ENCODE measurements at regions of chr19 and their contacts with region 1.

Region 1: DNA sequence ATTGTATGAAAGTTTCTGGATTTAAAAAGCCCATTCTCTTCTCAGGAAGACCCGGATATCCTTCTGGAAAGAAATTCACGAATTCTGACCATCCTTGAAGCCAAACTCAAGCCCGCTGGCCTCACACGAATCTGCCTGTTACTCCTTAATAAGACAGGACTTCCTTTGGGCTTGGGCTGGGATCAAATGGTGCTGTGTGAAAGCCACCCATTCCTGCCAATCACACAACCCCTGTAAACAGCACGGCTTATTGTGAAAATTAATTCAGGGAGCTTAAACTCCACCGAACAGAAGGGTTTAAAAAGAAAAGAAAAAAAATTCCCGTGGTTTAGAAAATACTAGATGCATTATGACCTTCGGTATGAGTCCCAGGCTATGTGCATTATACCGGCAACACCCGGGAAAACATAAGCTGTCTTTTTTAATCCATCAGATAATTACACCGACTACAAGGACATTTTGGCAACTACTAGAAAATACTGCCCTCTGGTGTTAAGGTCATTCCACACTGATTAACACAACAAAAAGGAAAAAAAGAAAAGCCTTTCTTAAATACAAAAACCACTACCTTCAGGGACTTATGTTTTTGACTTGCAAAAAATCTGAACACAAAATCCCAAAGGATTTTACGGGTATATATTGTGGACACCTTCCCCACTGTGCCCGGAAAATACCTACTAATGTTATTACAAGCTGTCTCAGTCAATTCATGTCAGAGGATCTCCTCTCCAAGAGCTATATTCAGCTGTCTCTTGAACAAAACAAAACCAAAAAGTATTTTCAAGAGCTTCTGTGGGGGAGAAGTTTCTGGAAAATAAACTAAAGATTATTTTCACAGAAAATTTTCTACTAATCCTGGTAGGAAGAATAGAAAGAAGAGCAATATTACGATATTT is 76.0 kb upstream of the LSM14A start:
- DNase-seq: peak; percentile 11
- H3K4me3 ChIP-seq: no peak overlapping the region
- H3K27ac ChIP-seq: no peak overlapping the region
- H3K27me3 ChIP-seq: no peaks in the 10 kb centered on the region
- CTCF ChIP-seq: peak; percentile 57

Region 2: DNA sequence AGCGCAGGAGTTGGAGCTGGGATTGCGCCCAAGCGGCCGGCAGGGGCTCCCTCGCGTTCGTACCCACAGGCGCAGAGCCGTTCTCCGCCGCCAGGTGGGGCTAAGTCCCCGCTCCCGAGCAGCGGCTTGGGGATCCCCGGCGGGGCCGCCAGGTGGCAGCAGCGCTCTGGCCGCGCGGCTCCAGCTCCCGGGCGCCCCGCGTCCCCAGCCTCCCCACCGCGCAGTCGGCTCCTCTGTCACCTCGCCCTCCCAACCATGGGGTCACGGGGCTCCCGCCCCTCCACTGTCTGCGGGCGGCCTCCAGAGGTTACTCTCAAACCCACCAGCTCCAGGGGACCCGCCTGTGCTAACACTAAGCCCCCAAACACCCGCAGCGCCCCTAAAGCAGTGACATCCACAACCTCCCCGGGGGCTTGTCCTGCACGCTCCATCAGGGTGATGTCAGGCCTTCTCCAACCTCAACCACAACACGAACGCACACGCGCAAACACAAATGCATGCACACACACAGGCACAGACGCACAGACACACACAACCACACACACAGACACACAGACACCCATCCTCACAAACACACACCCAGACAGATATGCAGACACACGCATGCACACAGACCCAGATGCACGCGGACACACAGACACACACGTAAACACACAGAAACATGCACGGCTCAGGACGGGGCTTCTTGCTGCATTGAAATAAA is 318.0 kb before region 1 on chr19:
- CTCF ChIA-PET with region 1: interaction called, 127 read pairs
- POLR2A ChIA-PET with region 1: no interaction called
- DNase-seq: no peak
- H3K4me3 ChIP-seq: no peak overlapping the region
- H3K27ac ChIP-seq: peak overlapping the region; percentile 11
- H3K27me3 ChIP-seq: peaks cover 11% of the 10 kb centered on the region
- CTCF ChIP-seq: peak; percentile 100

Region 3: DNA sequence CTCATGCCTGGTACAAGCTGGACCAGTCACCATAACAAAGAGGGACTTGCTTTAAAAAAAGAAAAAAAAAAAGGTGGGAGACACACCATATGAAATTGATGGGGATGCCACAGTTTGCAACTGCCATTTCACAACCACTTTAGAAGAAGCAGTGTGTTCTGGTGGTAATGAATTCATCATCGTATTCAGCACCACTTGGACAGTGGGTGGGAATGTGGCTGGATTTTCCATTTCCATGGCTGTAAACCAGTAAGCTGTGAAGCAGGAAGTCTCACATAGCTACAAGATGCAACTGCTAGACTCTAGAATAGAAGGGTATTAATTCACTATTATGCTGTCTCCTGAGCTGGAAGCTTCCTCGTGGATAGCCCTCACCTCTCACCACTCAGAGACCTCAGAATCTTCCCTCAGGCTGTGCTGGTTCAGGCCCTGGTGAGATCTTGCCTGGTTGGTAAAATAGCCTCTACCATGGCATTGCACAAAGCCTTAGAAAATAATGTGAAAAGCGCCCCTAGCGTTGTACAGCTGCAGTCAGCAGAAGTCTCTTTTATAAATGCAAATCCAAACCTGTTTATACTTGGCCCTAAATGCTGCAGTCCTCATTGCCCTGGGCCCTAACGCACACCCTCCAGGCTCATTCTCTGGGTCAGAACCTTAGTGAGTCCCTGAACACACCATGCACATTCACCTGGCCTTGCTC is 148.9 kb before region 1 on chr19:
- CTCF ChIA-PET with region 1: no interaction called
- POLR2A ChIA-PET with region 1: no interaction called
- DNase-seq: no peak
- H3K4me3 ChIP-seq: no peak overlapping the region
- H3K27ac ChIP-seq: no peak overlapping the region
- H3K27me3 ChIP-seq: no peaks in the 10 kb centered on the region
- CTCF ChIP-seq: 0 out of 2 replicates have a peak, but pooled peaks have one; percentile 3

Region 4: GRCh38 chr19:33998739-33999345 is 97.4 kb before region 1 on chr19:
- CTCF ChIA-PET with region 1: interaction called, 20 read pairs
- POLR2A ChIA-PET with region 1: no interaction called
- DNase-seq: no peak
- H3K4me3 ChIP-seq: no peak overlapping the region
- H3K27ac ChIP-seq: no peak overlapping the region
- H3K27me3 ChIP-seq: peaks cover 2% of the 10 kb centered on the region
- CTCF ChIP-seq: peak; percentile 46

Region 5: GRCh38 chr19:34041925-34042521 is 54.2 kb before region 1 on chr19:
- CTCF ChIA-PET with region 1: interaction called, 116 read pairs
- POLR2A ChIA-PET with region 1: no interaction called
- DNase-seq: no peak
- H3K4me3 ChIP-seq: no peak overlapping the region
- H3K27ac ChIP-seq: no peak overlapping the region
- H3K27me3 ChIP-seq: no peaks in the 10 kb centered on the region
- CTCF ChIP-seq: peak; percentile 91

Region 6: GRCh38 chr19:34067861-34068271 is 28.4 kb before region 1 on chr19:
- CTCF ChIA-PET with region 1: interaction called, 11 read pairs
- POLR2A ChIA-PET with region 1: no interaction called
- DNase-seq: no peak
- H3K4me3 ChIP-seq: no peak overlapping the region
- H3K27ac ChIP-seq: no peak overlapping the region
- H3K27me3 ChIP-seq: no peaks in the 10 kb centered on the region
- CTCF ChIP-seq: no peak

Region 7: GRCh38 chr19:34082289-34083077 is 13.8 kb before region 1 on chr19:
- CTCF ChIA-PET with region 1: interaction called, 33 read pairs
- POLR2A ChIA-PET with region 1: no interaction called
- DNase-seq: no peak
- H3K4me3 ChIP-seq: no peak overlapping the region
- H3K27ac ChIP-seq: no peak overlapping the region
- H3K27me3 ChIP-seq: peaks cover 6% of the 10 kb centered on the region
- CTCF ChIP-seq: no peak

Region 8: GRCh38 chr19:34120846-34121639 is 24.8 kb after region 1 on chr19:
- CTCF ChIA-PET with region 1: interaction called, 26 read pairs
- POLR2A ChIA-PET with region 1: no interaction called
- DNase-seq: peak; percentile 20
- H3K4me3 ChIP-seq: no peak overlapping the region
- H3K27ac ChIP-seq: no peak overlapping the region
- H3K27me3 ChIP-seq: peaks cover 9% of the 10 kb centered on the region
- CTCF ChIP-seq: peak; percentile 91

Measured in AG04450 (cell line).